ENCODE measurements at regions of chr6 and their contacts with region 1.

Region 1: GRCh38 chr6:122839477-122839876 is 50.4 kb downstream of the SMPDL3A start:
- DNase-seq: peak; percentile 66 to 72 (median 70)
- ATAC-seq: peak; percentile 90
- H3K4me3 ChIP-seq: no peak overlapping the region
- H3K27ac ChIP-seq: no peak overlapping the region
- H3K4me1 ChIP-seq: no peaks in the 10 kb centered on the region
- H3K27me3 ChIP-seq: peaks cover 4 to 9% of the 10 kb centered on the region in 2 experiments; a peak in 3 of 5 replicates
- CTCF ChIP-seq: peak; percentile 61 to 76 (median 61)
- EP300 ChIP-seq: no peak
- POLR2A ChIP-seq: no peak
- RAD21 ChIP-seq: peak; percentile 44 to 67

Region 2: GRCh38 chr6:122471107-122472021 is 368.1 kb before region 1 on chr6 and contains the start of gene SERINC1:
- CTCF ChIA-PET with region 1: no interaction called
- POLR2A ChIA-PET with region 1: no interaction called
- in situ Hi-C with region 1: no loop called
- intact Hi-C with region 1: loop called (anchors 1 kb)
- DNase-seq: peak; percentile 91 to 97 (median 92)
- ATAC-seq: peak; percentile 96
- H3K4me3 ChIP-seq: peak within 1 kb of the TSS; percentile 60
- H3K27ac ChIP-seq: peak within 1 kb of the TSS; percentile 87
- H3K4me1 ChIP-seq: peaks cover 0 to 6% of the 10 kb centered on the region in 2 experiments; a peak in 2 of 5 replicates
- H3K27me3 ChIP-seq: no peaks in the 10 kb centered on the region
- CTCF ChIP-seq: no peak
- EP300 ChIP-seq: no peak
- POLR2A ChIP-seq: peak; percentile 92
- RAD21 ChIP-seq: no peak
- polyA plus RNA-seq, gene SERINC1: 33.2 to 37.3 TPM

Region 3: GRCh38 chr6:122491919-122492555 is 347.4 kb before region 1 on chr6:
- CTCF ChIA-PET with region 1: no interaction called
- POLR2A ChIA-PET with region 1: no interaction called
- in situ Hi-C with region 1: loop called (anchors 10 kb)
- intact Hi-C with region 1: loop called (anchors 2 kb)
- DNase-seq: peak; percentile 58 to 82 (median 64)
- ATAC-seq: peak; percentile 99
- H3K4me3 ChIP-seq: no peak overlapping the region
- H3K27ac ChIP-seq: no peak overlapping the region
- H3K4me1 ChIP-seq: no peaks in the 10 kb centered on the region; a peak in 1 of 5 replicates
- H3K27me3 ChIP-seq: no peaks in the 10 kb centered on the region
- CTCF ChIP-seq: peak; percentile 64 to 77 (median 75)
- EP300 ChIP-seq: no peak
- POLR2A ChIP-seq: no peak
- RAD21 ChIP-seq: peak; percentile 45 to 74; a peak in 3 of 4 replicates

Region 4: GRCh38 chr6:122749451-122750050 is 89.9 kb before region 1 on chr6:
- CTCF ChIA-PET with region 1: interaction called, 4 read pairs
- POLR2A ChIA-PET with region 1: no interaction called
- in situ Hi-C with region 1: loop called (anchors 10 kb)
- intact Hi-C with region 1: no loop called
- DNase-seq: no peak
- ATAC-seq: no peak
- H3K4me3 ChIP-seq: no peak overlapping the region
- H3K27ac ChIP-seq: no peak overlapping the region
- H3K4me1 ChIP-seq: no peaks in the 10 kb centered on the region
- H3K27me3 ChIP-seq: no peaks in the 10 kb centered on the region
- CTCF ChIP-seq: no peak
- EP300 ChIP-seq: no peak
- POLR2A ChIP-seq: no peak
- RAD21 ChIP-seq: no peak